Panc1 (cell line): ENCODE measurements at regions of chr6 and their contacts with region 1.

Region 1: DNA sequence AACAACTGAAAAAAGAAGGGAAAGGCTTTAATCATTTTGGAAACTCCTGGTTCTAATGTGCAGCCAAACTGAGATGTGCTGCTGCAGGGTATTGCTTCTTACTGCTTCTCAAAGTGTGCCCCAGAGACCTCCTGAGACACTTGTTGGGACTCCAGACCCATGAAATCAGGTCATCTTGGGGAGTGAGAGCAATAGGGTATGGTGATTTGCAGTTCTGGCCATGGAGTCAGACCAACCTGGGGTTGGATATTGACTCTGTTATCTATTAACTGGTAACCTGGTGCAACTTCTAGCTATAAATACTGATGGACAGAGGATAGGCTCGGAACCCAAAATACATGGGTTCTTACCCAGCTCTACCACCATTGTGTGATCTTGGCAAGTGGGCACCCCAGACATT is 3.8 kb downstream of the TSPO2 start:
- DNase-seq: no peak
- ATAC-seq: no peak
- H3K4me3 ChIP-seq: no peak overlapping the region
- H3K27ac ChIP-seq: no peak overlapping the region
- H3K4me1 ChIP-seq: 0 out of 2 replicates have a peak, but pooled peaks cover 2% of the 10 kb centered on the region
- H3K27me3 ChIP-seq: no peaks in the 10 kb centered on the region
- CTCF ChIP-seq: no peak

Region 2: DNA sequence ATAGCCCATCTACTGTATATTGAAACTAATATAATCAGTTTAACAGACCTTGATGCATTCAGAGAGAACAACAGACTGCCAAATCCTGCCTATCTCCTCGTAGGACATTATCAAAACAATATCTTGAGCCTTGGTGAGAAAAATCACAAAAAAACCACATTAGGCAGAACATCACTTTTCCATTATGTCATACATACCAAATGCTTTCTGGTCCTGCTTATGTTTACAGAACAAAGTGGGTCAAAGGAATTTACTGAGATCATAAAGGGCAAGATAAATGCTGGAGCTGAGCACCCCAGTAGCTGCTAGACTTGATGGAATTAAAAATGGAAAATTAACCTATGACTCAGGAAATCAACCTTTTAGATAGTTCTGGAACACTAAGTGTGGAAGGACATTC is 1528.3 kb before region 1 on chr6:
- CTCF ChIA-PET with region 1: no interaction called
- POLR2A ChIA-PET with region 1: no interaction called
- in situ Hi-C with region 1: no loop called
- intact Hi-C with region 1: no loop called
- DNase-seq: no peak
- ATAC-seq: no peak
- H3K4me3 ChIP-seq: no peak overlapping the region
- H3K27ac ChIP-seq: no peak overlapping the region
- H3K4me1 ChIP-seq: no peaks in the 10 kb centered on the region
- H3K27me3 ChIP-seq: no peaks in the 10 kb centered on the region
- CTCF ChIP-seq: no peak

Region 3: GRCh38 chr6:40755046-40755681 is 290.9 kb before region 1 on chr6:
- CTCF ChIA-PET with region 1: no interaction called
- POLR2A ChIA-PET with region 1: no interaction called
- in situ Hi-C with region 1: no loop called
- intact Hi-C with region 1: no loop called
- DNase-seq: no peak
- ATAC-seq: no peak
- H3K4me3 ChIP-seq: no peak overlapping the region
- H3K27ac ChIP-seq: no peak overlapping the region
- H3K4me1 ChIP-seq: no peaks in the 10 kb centered on the region
- H3K27me3 ChIP-seq: peaks cover 13% of the 10 kb centered on the region
- CTCF ChIP-seq: no peak

Region 4: GRCh38 chr6:41066867-41067304 is 20.8 kb after region 1 on chr6:
- CTCF ChIA-PET with region 1: interaction called, 13 read pairs
- POLR2A ChIA-PET with region 1: no interaction called
- in situ Hi-C with region 1: no loop called
- intact Hi-C with region 1: no loop called
- DNase-seq: no peak
- ATAC-seq: 0 out of 2 replicates have a peak, but pooled peaks have one; percentile 35
- H3K4me3 ChIP-seq: no peak overlapping the region
- H3K27ac ChIP-seq: no peak overlapping the region
- H3K4me1 ChIP-seq: peaks cover 13% of the 10 kb centered on the region
- H3K27me3 ChIP-seq: no peaks in the 10 kb centered on the region
- CTCF ChIP-seq: peak; percentile 82

Region 5: DNA sequence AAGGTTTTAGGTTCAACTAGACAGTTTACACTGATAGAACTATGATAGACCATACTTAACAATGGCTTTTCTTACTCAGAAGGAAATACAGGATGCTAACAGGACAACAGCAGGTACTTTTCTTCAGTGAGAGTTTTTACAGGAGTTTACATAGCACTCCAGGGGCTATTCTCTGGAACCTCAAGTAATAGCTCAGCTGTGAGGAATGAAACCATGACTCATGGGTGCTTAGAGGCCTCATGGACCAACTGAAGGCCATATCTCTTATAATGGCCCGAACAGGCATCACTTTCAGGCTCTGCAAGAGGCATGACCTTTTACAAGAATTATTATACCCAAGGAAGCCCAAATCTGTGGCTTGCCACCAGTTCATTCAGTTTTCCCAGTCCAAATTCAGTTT is 76.3 kb after region 1 on chr6:
- CTCF ChIA-PET with region 1: no interaction called
- POLR2A ChIA-PET with region 1: no interaction called
- in situ Hi-C with region 1: no loop called
- intact Hi-C with region 1: no loop called
- DNase-seq: no peak
- ATAC-seq: no peak
- H3K4me3 ChIP-seq: no peak overlapping the region
- H3K27ac ChIP-seq: no peak overlapping the region
- H3K4me1 ChIP-seq: no peaks in the 10 kb centered on the region
- H3K27me3 ChIP-seq: no peaks in the 10 kb centered on the region
- CTCF ChIP-seq: no peak